ENCODE measurements at regions of chr3 and their contacts with region 1.

Region 1: DNA sequence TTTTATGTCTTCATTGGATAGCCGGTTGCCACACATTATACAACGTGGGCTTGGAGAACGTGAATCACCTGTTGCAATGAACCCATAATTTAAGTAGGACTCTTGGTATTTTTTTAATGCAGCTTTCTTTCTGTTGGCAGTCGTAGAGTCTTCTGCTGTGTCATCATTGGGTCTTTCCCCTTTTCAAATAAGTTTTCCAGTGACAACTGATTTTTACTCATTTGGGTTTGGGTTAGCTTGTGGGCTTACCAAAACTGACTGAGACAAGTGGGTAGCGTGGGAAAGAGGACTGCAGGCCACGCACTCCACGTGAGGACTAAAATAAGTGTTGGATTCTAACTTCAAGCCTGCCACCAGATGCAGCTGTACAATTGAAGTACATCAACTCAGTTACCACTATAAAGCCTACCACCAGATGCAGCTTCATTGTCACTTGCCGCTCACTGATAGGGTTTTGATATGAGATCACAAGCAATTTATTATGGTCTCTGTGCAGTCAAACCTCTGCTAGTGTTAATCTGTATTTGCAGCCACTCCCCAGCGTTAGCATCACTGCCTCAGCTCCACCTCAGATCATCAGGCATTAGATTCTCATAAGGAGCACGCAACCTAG is 6.4 kb upstream of the CAPN7 start:
- DNase-seq: no peak
- ATAC-seq: no peak
- H3K4me3 ChIP-seq: no peak overlapping the region
- H3K27ac ChIP-seq: no peak overlapping the region
- H3K4me1 ChIP-seq: no peaks in the 10 kb centered on the region
- H3K27me3 ChIP-seq: no peaks in the 10 kb centered on the region; a peak in 1 of 4 replicates
- CTCF ChIP-seq: no peak
- EP300 ChIP-seq: no peak
- POLR2A ChIP-seq: no peak
- RAD21 ChIP-seq: no peak

Region 2: GRCh38 chr3:14988988-14989394 is 210.6 kb before region 1 on chr3:
- CTCF ChIA-PET with region 1: no interaction called
- POLR2A ChIA-PET with region 1: no interaction called
- RAD21 ChIA-PET with region 1: no interaction called
- SMC1A ChIA-PET with region 1: no interaction called
- in situ Hi-C with region 1: no loop called
- intact Hi-C with region 1: no loop called
- DNase-seq: peak; percentile 87
- ATAC-seq: peak; percentile 100
- H3K4me3 ChIP-seq: no peak overlapping the region; the same call in 1 of the 2 replicates
- H3K27ac ChIP-seq: peak overlapping the region; percentile 19
- H3K4me1 ChIP-seq: no peaks in the 10 kb centered on the region
- H3K27me3 ChIP-seq: no peaks in the 10 kb centered on the region
- CTCF ChIP-seq: peak; percentile 45 to 68 (median 58)
- EP300 ChIP-seq: peak in 1 of 2 experiments; percentile 66; a peak in 2 of 4 replicates
- POLR2A ChIP-seq: peak; percentile 51; the same call in 1 of the 2 replicates
- RAD21 ChIP-seq: peak; percentile 54; the same call in 1 of the 2 replicates

Region 3: GRCh38 chr3:15180042-15180611 is 19.5 kb before region 1 on chr3:
- CTCF ChIA-PET with region 1: interaction called, 26 read pairs
- POLR2A ChIA-PET with region 1: interaction called, 3 read pairs
- RAD21 ChIA-PET with region 1: interaction called, 8 read pairs
- SMC1A ChIA-PET with region 1: interaction called, 30 read pairs
- in situ Hi-C with region 1: no loop called
- intact Hi-C with region 1: no loop called
- DNase-seq: peak; percentile 40
- ATAC-seq: peak; percentile 92
- H3K4me3 ChIP-seq: peak overlapping the region; percentile 34; the same call in 1 of the 2 replicates
- H3K27ac ChIP-seq: peak overlapping the region; percentile 35
- H3K4me1 ChIP-seq: peaks cover 8% of the 10 kb centered on the region; the same call in 1 of the 2 replicates
- H3K27me3 ChIP-seq: no peaks in the 10 kb centered on the region
- CTCF ChIP-seq: no peak
- EP300 ChIP-seq: peak; percentile 17 to 18; a peak in 1 of 4 replicates
- POLR2A ChIP-seq: no peak
- RAD21 ChIP-seq: no peak

Region 4: GRCh38 chr3:15186101-15186476 is 13.5 kb before region 1 on chr3:
- CTCF ChIA-PET with region 1: interaction called, 14 read pairs
- POLR2A ChIA-PET with region 1: interaction called, 3 read pairs
- RAD21 ChIA-PET with region 1: interaction called, 8 read pairs
- SMC1A ChIA-PET with region 1: interaction called, 30 read pairs
- in situ Hi-C with region 1: no loop called
- intact Hi-C with region 1: no loop called
- DNase-seq: no peak
- ATAC-seq: no peak
- H3K4me3 ChIP-seq: no peak overlapping the region
- H3K27ac ChIP-seq: no peak overlapping the region
- H3K4me1 ChIP-seq: peaks cover under 1% of the 10 kb centered on the region; the same call in 1 of the 2 replicates
- H3K27me3 ChIP-seq: no peaks in the 10 kb centered on the region
- CTCF ChIP-seq: no peak
- EP300 ChIP-seq: no peak
- POLR2A ChIP-seq: no peak
- RAD21 ChIP-seq: no peak